ENCODE measurements at regions of chr1 and their contacts with region 1.

Region 1: GRCh38 chr1:156773607-156774006 is 6.3 kb downstream of the PRCC start:
- DNase-seq: no peak
- H3K4me3 ChIP-seq: no peak overlapping the region
- H3K27ac ChIP-seq: no peak overlapping the region
- H3K4me1 ChIP-seq: peaks cover 8% of the 10 kb centered on the region
- H3K27me3 ChIP-seq: no peaks in the 10 kb centered on the region
- CTCF ChIP-seq: no peak

Region 2: DNA sequence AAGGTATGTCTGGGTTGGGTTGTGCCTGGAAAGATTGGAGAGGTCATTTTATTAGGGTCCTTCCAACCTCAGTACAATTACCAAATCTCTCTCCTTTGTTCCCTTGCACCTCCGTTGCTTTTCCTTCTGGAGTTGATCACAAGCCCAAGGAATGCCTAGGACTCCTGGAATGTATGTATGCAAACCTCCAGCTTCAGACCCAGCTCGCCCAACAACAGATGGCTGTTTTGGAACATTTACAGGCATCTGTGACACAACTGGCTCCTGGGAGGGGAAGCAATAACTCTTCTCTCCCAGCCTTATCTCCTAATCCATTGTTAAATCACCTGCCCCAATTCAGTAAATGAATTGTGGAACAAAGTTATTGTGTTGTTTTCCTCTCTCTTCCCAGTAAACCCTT is 427.0 kb before region 1 on chr1:
- CTCF ChIA-PET with region 1: no interaction called
- dilution Hi-C with region 1: no loop called
- in situ Hi-C with region 1: no loop called
- intact Hi-C with region 1: no loop called
- DNase-seq: no peak
- H3K4me3 ChIP-seq: no peak overlapping the region
- H3K27ac ChIP-seq: no peak overlapping the region
- H3K4me1 ChIP-seq: no peaks in the 10 kb centered on the region
- H3K27me3 ChIP-seq: no peaks in the 10 kb centered on the region
- CTCF ChIP-seq: no peak

Region 3: GRCh38 chr1:156673387-156674121 is 100.1 kb before region 1 on chr1:
- CTCF ChIA-PET with region 1: no interaction called
- dilution Hi-C with region 1: no loop called
- in situ Hi-C with region 1: no loop called
- intact Hi-C with region 1: no loop called
- DNase-seq: no peak
- H3K4me3 ChIP-seq: no peak overlapping the region
- H3K27ac ChIP-seq: no peak overlapping the region
- H3K4me1 ChIP-seq: peaks cover 4% of the 10 kb centered on the region
- H3K27me3 ChIP-seq: peaks cover 25% of the 10 kb centered on the region
- CTCF ChIP-seq: no peak

Region 4: GRCh38 chr1:156789621-156790318 is 16.2 kb after region 1 on chr1:
- CTCF ChIA-PET with region 1: no interaction called
- dilution Hi-C with region 1: no loop called
- in situ Hi-C with region 1: no loop called
- intact Hi-C with region 1: loop called (anchors 2 kb)
- DNase-seq: no peak
- H3K4me3 ChIP-seq: no peak overlapping the region
- H3K27ac ChIP-seq: no peak overlapping the region
- H3K4me1 ChIP-seq: no peaks in the 10 kb centered on the region
- H3K27me3 ChIP-seq: no peaks in the 10 kb centered on the region
- CTCF ChIP-seq: no peak

Region 5: DNA sequence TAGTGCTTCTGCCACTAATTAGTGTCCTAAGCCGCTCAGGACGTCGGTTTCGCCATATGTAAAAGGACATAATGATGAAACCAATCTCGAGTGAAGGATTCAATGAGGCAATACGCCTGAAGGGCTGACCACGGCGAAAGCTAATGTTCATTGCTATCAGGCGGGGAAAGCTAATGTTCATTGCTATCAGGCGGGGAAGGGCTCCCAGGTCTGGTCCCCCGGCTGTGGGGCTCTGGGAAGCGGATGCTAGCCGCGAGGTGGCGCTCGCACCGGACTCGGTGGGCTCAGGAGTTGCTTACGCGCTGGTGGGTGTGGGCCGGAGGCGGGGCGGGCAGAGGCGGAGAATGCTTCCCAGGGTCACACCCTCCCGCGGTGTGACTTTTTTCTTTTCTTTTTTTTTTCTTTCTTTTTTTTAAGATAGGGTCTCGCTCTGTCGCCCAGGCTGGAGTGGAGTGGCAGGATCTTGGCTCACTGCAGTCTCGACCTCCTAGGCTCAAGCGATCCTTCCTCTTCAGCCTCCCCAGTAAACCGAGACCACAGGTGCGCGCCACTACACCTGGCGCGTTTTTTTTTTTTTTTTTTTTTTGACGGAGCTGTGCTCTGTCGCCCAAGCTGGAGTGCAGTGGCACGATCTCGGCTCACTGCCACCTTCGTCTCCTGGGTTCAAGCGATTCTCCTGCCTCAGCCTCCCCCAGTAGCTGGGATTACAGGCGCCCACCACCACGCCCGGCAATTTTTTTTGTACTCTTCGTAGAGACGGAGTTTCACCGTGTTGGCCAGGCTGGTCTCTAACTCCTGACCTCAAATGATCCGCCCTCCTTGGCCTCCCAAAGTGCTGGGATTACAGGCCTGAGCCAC is 118.8 kb after region 1 on chr1:
- CTCF ChIA-PET with region 1: no interaction called
- dilution Hi-C with region 1: no loop called
- in situ Hi-C with region 1: no loop called
- intact Hi-C with region 1: no loop called
- DNase-seq: peak; percentile 61
- H3K4me3 ChIP-seq: peak overlapping the region; percentile 7 to 43 (median 11)
- H3K27ac ChIP-seq: no peak overlapping the region
- H3K4me1 ChIP-seq: peaks cover 30% of the 10 kb centered on the region
- H3K27me3 ChIP-seq: no peaks in the 10 kb centered on the region
- CTCF ChIP-seq: peak; percentile 63 to 84

Measured in mammary epithelial cell (primary cell).